Panc1 (cell line): ENCODE measurements at regions of chr11 and their contacts with region 1.

Region 1: GRCh38 chr11:127003260-127003981 is 2.9 kb upstream of the KIRREL3 start:
- DNase-seq: no peak
- ATAC-seq: peak; percentile 85
- H3K4me3 ChIP-seq: peak overlapping the region; percentile 12 to 16; a peak in 3 of 4 replicates
- H3K27ac ChIP-seq: no peak overlapping the region
- H3K4me1 ChIP-seq: no peaks in the 10 kb centered on the region
- H3K27me3 ChIP-seq: peaks cover 45% of the 10 kb centered on the region
- CTCF ChIP-seq: peak; percentile 76

Region 2: GRCh38 chr11:126115816-126116331 is 887.5 kb before region 1 on chr11:
- CTCF ChIA-PET with region 1: no interaction called
- POLR2A ChIA-PET with region 1: interaction called, 10 read pairs
- in situ Hi-C with region 1: no loop called
- intact Hi-C with region 1: no loop called
- DNase-seq: peak; percentile 8
- ATAC-seq: peak; percentile 91
- H3K4me3 ChIP-seq: peak overlapping the region in 1 of 2 experiments; percentile 27; a peak in 2 of 4 replicates
- H3K27ac ChIP-seq: peak overlapping the region; percentile 79
- H3K4me1 ChIP-seq: peaks cover 41% of the 10 kb centered on the region
- H3K27me3 ChIP-seq: no peaks in the 10 kb centered on the region
- CTCF ChIP-seq: no peak

Region 3: DNA sequence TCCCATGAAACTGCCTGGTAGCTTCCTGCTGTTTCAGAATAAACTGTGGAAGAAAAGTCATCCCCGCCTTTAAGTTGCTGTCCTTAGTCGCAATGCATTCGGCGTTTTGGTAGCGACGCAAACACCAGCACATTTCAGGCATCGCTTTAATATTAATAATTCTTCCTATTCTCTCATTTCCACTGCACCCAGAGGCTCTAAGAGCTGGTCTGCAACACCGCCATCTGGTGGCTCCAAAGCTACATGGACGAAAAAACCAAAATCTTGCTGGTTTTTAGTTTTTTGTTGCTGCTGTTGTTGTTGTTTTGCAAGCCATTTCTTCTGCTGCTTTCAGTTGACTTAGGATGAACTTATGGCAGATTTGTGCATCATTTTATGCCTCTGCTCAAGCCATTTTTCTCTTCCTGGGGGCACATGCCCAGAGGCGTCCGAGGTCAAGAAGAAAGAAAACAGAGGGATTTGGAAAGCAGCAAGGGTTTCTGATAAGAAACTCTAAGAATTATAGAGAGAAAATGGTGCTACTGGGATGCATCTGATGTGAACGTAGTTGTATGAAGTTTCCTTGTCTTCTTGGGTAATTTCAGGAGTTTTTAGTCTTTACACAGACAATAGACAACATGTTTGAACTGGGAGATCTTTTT is 342.5 kb after region 1 on chr11:
- CTCF ChIA-PET with region 1: no interaction called
- POLR2A ChIA-PET with region 1: no interaction called
- in situ Hi-C with region 1: no loop called
- intact Hi-C with region 1: no loop called
- DNase-seq: peak; percentile 22
- ATAC-seq: peak; percentile 58; the same call in 1 of the 2 replicates
- H3K4me3 ChIP-seq: no peak overlapping the region
- H3K27ac ChIP-seq: no peak overlapping the region
- H3K4me1 ChIP-seq: no peaks in the 10 kb centered on the region; the same call in 1 of the 2 replicates
- H3K27me3 ChIP-seq: peaks cover 2% of the 10 kb centered on the region
- CTCF ChIP-seq: peak; percentile 83